ENCODE measurements at regions of chr19 and their contacts with region 1.

Region 1: GRCh38 chr19:10864538-10864899 is 6.8 kb upstream of the CARM1 start:
- DNase-seq: no peak
- H3K4me3 ChIP-seq: no peak overlapping the region
- H3K27me3 ChIP-seq: no peaks in the 10 kb centered on the region
- CTCF ChIP-seq: peak; percentile 96

Region 2: DNA sequence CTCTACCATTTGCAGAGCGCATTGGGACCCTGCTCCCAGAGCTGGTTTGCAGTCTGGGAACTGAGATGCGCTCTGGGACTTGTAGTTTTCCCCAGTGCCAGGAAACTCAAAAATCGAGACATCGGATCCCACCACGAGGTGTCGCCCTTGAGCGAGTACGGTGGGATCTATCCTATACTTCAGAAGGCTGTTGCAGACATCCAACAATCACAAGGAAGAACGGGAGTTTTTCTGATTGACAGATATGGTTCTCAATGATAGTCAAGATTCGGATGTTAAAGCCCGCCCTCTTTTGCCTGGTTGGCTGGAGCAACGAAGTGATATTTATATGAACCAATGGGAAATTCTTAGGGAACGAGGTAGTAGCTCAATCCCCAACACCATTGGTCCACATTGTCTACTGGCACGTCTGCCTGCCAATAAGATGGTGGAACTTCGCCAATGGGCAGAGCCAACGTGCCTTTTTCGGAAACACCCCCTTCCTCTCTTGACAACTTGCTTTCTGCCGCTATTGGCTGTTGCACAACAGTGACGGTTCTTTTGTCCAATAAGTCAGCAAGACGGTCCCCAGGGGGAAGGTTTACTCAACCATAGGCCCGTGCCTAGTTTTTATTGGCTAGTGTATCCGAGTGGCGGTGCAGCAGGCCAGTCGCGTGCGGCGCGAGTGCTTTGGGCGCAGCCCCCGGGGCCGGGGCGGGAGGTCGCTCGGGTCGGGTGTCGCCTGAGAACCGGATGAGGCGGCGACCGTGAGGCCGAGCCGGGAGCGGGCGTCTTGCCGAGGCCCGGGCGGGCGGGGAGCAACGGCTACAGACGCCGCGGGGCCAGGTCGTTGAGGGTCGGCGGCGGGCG is 146.9 kb before region 1 on chr19 and contains the start of gene DNM2:
- CTCF ChIA-PET with region 1: interaction called, 121 read pairs
- POLR2A ChIA-PET with region 1: no interaction called
- DNase-seq: peak; percentile 100
- H3K4me3 ChIP-seq: peak within 1 kb of the TSS; percentile 53
- H3K27me3 ChIP-seq: no peaks in the 10 kb centered on the region
- CTCF ChIP-seq: peak; percentile 80
- polyA plus RNA-seq, gene DNM2: 43.5 and 64.2 TPM in 2 replicates

Region 3: GRCh38 chr19:10835754-10836477 is 28.6 kb before region 1 on chr19 and contains the start of gene TMED1:
- CTCF ChIA-PET with region 1: interaction called, 26 read pairs
- POLR2A ChIA-PET with region 1: no interaction called
- DNase-seq: peak; percentile 94
- H3K4me3 ChIP-seq: peak within 1 kb of the TSS; percentile 66
- H3K27me3 ChIP-seq: no peaks in the 10 kb centered on the region
- CTCF ChIP-seq: peak; percentile 17; the same call in 1 of the 2 replicates
- polyA plus RNA-seq, gene TMED1: 50.2 and 85.3 TPM in 2 replicates

Region 4: DNA sequence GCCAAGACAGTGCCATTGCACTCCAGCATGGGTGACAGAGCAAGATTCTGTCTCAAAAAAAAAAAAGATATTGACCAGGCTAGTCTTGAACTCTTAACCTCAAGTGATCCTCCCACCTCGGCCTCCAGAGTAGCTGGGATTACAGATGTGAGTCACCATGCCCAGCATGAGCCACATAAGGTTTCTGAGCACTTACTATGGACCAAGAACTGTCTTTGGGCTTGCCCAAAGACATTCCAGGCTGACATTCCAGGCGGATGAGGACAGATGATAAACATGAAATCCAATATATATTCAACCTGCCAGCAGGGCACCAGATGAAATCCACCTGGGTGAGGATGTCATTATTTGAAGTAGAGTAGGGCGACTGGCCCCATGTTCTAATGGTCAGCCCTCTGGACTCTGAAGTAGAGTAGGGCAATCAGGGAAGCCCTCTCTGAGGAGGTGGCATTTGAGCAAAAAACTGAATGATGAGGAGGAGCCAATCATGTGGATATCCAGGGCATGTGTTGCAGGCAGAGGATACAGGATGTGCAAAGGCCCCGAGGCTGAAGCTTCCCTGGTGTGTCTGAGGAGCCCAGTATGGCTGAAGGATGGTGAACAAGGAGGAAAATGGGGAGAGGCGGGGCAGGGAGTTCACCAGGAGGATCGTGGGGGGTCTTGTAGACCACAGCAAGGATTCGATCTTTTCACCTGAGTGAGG is 12.3 kb before region 1 on chr19:
- CTCF ChIA-PET with region 1: interaction called, 57 read pairs
- POLR2A ChIA-PET with region 1: no interaction called
- DNase-seq: peak; percentile 23
- H3K4me3 ChIP-seq: no peak overlapping the region
- H3K27me3 ChIP-seq: peaks cover 8% of the 10 kb centered on the region; the same call in 1 of the 2 replicates
- CTCF ChIP-seq: no peak

Region 5: GRCh38 chr19:10960314-10961072 is 96.0 kb after region 1 on chr19 and contains the start of gene SMARCA4:
- CTCF ChIA-PET with region 1: no interaction called
- POLR2A ChIA-PET with region 1: no interaction called
- DNase-seq: peak; percentile 77
- H3K4me3 ChIP-seq: peak within 1 kb of the TSS; percentile 83
- H3K27me3 ChIP-seq: no peaks in the 10 kb centered on the region
- CTCF ChIP-seq: no peak
- polyA plus RNA-seq, gene SMARCA4: 25.2 and 46.3 TPM in 2 replicates

Measured in BJ (cell line).